ENCODE measurements at regions of chr16 and their contacts with region 1.

Region 1: GRCh38 chr16:21158208-21159110 is at the start of gene LDAF1:
- DNase-seq: peak; percentile 89
- ATAC-seq: peak; percentile 99
- H3K4me3 Mint-ChIP-seq: peak within 1 kb of the TSS; percentile 87
- H3K27ac Mint-ChIP-seq: peak within 1 kb of the TSS; percentile 77
- H3K4me1 Mint-ChIP-seq: peaks cover 8% of the 10 kb centered on the region
- H3K27me3 Mint-ChIP-seq: no peaks in the 10 kb centered on the region
- total RNA-seq, gene LDAF1: 10.7 to 12.3 TPM

Region 2: DNA sequence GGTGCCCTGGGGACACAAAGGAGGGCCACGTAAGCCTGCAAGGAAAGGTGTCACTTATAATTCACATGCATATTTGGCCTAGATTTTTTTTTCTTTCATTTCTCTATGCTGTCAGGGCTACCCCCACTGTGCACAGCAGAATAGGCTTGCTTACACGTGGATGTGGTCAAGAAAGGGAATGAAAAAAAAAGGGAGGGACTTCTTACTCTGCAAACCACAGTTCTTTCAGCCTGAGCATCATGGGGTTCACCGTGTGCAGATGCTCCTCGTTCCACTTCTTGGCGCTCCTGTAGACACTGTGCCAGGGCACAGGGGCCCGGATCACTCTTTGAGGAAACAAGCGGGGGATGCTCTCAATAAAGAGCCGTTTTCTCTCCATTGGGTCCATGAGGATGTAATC is 24.4 kb before region 1 on chr16:
- POLR2A ChIA-PET with region 1: no interaction called
- DNase-seq: no peak
- ATAC-seq: no peak
- H3K4me3 Mint-ChIP-seq: no peak overlapping the region
- H3K27ac Mint-ChIP-seq: no peak overlapping the region
- H3K4me1 Mint-ChIP-seq: peaks cover 4% of the 10 kb centered on the region
- H3K27me3 Mint-ChIP-seq: peaks cover 4% of the 10 kb centered on the region

Region 3: DNA sequence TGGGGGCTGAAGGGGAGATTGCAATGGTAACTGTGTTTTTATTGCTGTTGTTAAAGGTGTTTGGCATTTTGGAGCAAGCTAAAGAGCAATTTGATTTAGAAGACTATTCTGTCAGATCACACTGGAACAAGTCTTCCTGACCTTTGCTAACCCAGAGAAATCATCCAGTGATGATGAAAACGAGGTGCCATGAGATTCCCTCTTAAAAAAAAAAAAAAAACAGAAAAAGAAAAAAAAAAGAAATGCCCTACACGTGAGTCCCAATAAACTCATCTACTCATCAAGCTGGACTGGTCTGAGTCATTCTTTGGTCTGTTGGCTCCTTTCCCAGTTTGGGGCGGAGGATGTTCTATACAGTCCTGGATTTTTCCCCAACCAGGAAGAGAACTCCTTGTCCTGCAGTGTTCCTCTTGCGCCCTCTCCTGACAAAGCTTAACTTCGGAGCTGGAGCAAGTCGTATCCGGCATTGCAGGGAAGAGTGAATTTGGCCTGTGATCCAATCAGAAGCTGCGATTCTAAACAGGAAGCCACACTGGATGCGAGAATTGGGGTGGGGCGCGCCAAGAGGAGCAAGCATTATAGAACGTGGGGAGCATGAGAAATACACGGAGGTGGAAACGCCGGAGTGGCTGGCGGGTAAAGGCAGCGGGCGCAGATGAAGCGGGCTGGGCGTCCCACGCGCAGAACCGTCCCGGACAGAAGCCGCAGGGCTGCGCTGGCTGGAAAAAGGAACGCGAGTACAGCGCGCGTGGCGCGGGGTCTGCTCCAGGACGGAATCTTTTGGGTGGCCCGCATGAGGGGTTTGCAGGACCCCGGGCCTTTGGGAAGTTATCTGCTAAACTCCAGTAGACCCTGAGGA is 142.1 kb after region 1 on chr16:
- POLR2A ChIA-PET with region 1: interaction called, 13 read pairs
- DNase-seq: peak; percentile 45
- ATAC-seq: peak; percentile 66
- H3K4me3 Mint-ChIP-seq: peak overlapping the region; percentile 90
- H3K27ac Mint-ChIP-seq: peak overlapping the region; percentile 25
- H3K4me1 Mint-ChIP-seq: peaks cover 14% of the 10 kb centered on the region
- H3K27me3 Mint-ChIP-seq: peaks cover 48% of the 10 kb centered on the region